Calu3 (cell line): ENCODE measurements at regions of chr17 and their contacts with region 1.

Region 1: DNA sequence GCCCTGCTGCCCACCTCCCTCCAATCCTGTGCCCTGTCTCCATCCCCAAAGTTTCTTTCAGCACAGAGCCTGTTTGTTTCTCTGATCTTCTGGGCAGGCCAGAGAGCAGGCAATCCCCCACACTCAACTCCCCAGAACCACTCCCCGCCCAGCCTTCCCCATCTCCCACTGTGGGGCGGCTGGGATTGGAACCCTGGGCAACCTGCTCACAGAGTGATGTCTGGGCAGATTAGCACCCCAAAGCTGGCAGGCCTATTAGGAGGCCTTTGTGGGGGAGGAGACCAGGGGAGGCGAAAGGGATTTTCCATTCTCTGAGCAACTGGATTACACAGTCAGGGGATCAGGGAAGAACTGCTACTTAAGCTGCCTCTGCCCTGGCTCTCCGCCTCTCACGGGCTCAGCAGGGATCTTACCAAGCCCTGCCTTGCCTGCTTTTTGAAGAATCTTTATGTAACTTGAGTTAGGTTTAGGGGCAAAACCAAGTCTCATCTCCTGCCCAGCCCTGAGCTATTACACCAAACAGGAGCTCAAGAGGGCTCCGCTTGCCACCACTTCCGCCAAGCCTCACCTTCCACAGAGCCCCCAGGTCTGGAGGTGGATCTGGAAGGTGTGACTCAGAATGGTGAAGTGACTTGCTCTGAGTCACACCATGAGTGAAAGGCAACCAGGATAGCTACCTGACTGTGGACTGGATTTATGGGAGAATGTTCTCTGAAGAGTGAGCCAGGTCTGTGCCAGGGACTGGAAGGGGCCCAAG is 16.0 kb upstream of the LHX1 start:
- DNase-seq: peak; percentile 96
- H3K4me3 Mint-ChIP-seq: peak overlapping the region; percentile 45
- H3K27ac Mint-ChIP-seq: peak overlapping the region; percentile 93
- H3K4me1 Mint-ChIP-seq: peaks cover 78% of the 10 kb centered on the region
- H3K27me3 Mint-ChIP-seq: no peaks in the 10 kb centered on the region
- CTCF ChIP-seq: no peak

Region 2: DNA sequence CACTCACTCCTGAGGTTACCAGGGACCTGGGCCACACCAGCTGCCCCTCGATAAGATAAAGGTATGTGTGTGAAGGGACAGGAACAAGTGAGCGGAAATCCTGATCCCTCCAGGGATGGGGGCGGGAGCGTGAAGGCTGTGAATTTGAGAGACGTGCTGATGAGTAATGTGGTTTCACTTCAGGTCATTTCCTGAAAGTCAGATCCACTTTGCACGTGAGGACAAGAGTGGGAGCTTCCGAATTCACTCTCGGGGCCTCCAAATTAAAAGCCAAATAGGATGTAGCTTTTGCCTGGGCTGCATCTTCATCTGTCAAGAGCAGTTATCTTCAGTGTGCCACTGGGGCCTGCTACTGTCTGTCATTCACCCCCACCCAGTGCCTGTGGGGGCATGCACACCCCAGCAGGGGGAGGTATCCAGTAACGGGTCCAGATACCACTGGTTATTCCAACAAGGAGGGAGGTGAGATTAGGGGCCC is 71.4 kb before region 1 on chr17:
- CTCF ChIA-PET with region 1: interaction called, 3 read pairs
- intact Hi-C with region 1: loop called (anchors 5 kb)
- DNase-seq: peak; percentile 50
- H3K4me3 Mint-ChIP-seq: no peak overlapping the region
- H3K27ac Mint-ChIP-seq: no peak overlapping the region
- H3K4me1 Mint-ChIP-seq: peaks cover 16% of the 10 kb centered on the region
- H3K27me3 Mint-ChIP-seq: peaks cover 38% of the 10 kb centered on the region
- CTCF ChIP-seq: peak; percentile 59

Region 3: GRCh38 chr17:36899250-36900159 is 21.8 kb before region 1 on chr17:
- CTCF ChIA-PET with region 1: interaction called, 8 read pairs
- intact Hi-C with region 1: loop called (anchors 1 kb)
- DNase-seq: no peak
- H3K4me3 Mint-ChIP-seq: no peak overlapping the region
- H3K27ac Mint-ChIP-seq: no peak overlapping the region
- H3K4me1 Mint-ChIP-seq: no peaks in the 10 kb centered on the region
- H3K27me3 Mint-ChIP-seq: peaks cover 47% of the 10 kb centered on the region
- CTCF ChIP-seq: no peak

Region 4: DNA sequence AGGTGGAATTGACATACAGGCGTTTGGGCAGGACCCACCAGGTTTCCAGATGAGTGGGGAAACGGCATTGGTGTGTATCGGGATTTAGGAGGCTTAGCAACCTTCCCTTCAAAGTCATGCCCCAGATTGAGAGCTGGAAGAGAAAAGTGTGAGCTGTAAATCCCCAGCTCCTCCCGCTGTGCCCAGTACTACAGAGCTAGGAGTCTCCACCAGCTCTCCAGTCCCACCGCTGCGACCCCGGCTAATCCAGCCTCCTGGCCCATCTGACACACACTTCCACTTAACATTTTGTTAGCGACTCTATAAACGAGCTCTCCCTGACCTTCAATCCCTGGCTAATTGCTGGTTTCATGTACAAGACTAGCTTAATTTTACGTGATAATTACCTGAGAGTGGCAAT is 13.9 kb before region 1 on chr17:
- CTCF ChIA-PET with region 1: interaction called, 10 read pairs
- intact Hi-C with region 1: no loop called
- DNase-seq: no peak
- H3K4me3 Mint-ChIP-seq: no peak overlapping the region
- H3K27ac Mint-ChIP-seq: no peak overlapping the region
- H3K4me1 Mint-ChIP-seq: no peaks in the 10 kb centered on the region
- H3K27me3 Mint-ChIP-seq: peaks cover 64% of the 10 kb centered on the region
- CTCF ChIP-seq: no peak

Region 5: GRCh38 chr17:36948717-36949460 is 27.6 kb after region 1 on chr17 and contains the start of gene AATF:
- CTCF ChIA-PET with region 1: interaction called, 15 read pairs
- intact Hi-C with region 1: loop called (anchors 2 kb)
- DNase-seq: peak; percentile 100
- H3K4me3 Mint-ChIP-seq: peak within 1 kb of the TSS; percentile 90
- H3K27ac Mint-ChIP-seq: peak within 1 kb of the TSS; percentile 85
- H3K4me1 Mint-ChIP-seq: peaks cover 45% of the 10 kb centered on the region
- H3K27me3 Mint-ChIP-seq: peaks cover 36% of the 10 kb centered on the region
- CTCF ChIP-seq: no peak
- total RNA-seq, gene AATF: 186 and 209 TPM in 2 replicates